HEK293 (cell line): ENCODE measurements at regions of chr9 and their contacts with region 1.

Region 1: GRCh38 chr9:129752915-129753729 is at the start of gene PTGES:
- H3K4me3 ChIP-seq: no peak within 1 kb of the TSS
- H3K27ac ChIP-seq: no peak within 1 kb of the TSS
- H3K4me1 ChIP-seq: no peaks in the 10 kb centered on the region
- CTCF ChIP-seq: no peak

Region 2: DNA sequence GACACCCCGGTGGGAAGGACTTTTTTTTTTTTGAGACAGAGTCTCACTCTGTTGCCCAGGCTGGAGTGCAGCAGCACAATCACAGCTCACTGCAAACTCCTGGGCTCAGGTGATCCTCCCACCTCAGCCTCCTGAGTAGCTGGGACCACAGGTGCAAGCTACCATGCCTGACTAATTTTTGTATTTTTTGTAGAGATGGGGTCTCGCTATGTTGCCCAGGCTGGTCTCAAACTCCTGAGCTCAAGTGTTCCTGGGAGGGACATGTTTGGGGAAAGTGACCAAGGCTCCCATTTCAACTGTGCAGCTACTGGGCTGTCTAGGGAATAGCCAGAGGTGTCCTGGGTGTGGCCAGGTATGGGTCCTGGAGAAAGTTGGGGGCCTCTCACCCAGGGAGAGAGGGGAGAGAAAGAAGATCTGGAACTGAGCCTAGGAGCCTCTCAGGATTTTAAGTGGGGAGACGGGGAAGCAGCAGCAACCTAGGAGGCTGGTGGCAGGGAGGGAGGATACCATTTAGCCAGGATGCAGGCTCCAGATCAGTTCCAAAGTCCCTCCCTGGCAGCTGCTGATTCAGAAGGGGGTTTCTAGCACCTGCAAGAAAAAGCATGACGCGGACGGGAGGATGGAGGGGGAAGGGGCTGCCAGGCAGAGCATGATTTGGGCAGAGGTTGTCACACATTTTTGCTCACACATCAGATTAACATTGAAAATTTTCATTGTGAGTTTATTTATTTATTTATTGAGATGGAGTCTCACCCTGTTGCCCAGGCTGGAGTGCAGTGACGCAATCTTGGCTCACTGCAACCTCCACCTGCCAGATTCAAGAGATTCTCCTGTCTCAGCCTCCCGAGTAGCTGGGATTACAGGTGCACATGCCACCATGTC is 43.1 kb after region 1 on chr9:
- CTCF ChIA-PET with region 1: interaction called, 13 read pairs
- POLR2A ChIA-PET with region 1: no interaction called
- H3K4me3 ChIP-seq: no peak overlapping the region
- H3K27ac ChIP-seq: no peak overlapping the region
- H3K4me1 ChIP-seq: no peaks in the 10 kb centered on the region
- CTCF ChIP-seq: no peak